Naive thymus-derived CD8-positive, alpha-beta T cell (primary cell): ENCODE measurements at regions of chr6 and their contacts with region 1.

Region 1: GRCh38 chr6:30556066-30556905 is at the start of gene GNL1:
- DNase-seq: peak; percentile 97 to 100 (median 99)
- ATAC-seq: peak; percentile 86 to 87
- H3K4me3 Mint-ChIP-seq: peak within 1 kb of the TSS; percentile 87 to 100 (median 99)
- H3K27ac Mint-ChIP-seq: peak within 1 kb of the TSS; percentile 98 to 100 (median 100)
- H3K4me1 Mint-ChIP-seq: peaks cover 25 to 70% (median 56%) of the 10 kb centered on the region in 4 donors
- H3K27me3 Mint-ChIP-seq: peaks cover 0 to 2% (median 0%) of the 10 kb centered on the region in 5 donors
- polyA plus RNA-seq, gene GNL1: 24.7 to 34.1 (median 28.7) TPM

Region 2: GRCh38 chr6:30364591-30364990 is 191.7 kb before region 1 on chr6:
- POLR2A ChIA-PET with region 1: no interaction called
- DNase-seq: no peak
- ATAC-seq: no peak
- H3K4me3 Mint-ChIP-seq: no peak overlapping the region
- H3K27ac Mint-ChIP-seq: no peak overlapping the region
- H3K4me1 Mint-ChIP-seq: no peaks in the 10 kb centered on the region
- H3K27me3 Mint-ChIP-seq: peaks cover 39 to 62% (median 55%) of the 10 kb centered on the region in 5 donors

Region 3: DNA sequence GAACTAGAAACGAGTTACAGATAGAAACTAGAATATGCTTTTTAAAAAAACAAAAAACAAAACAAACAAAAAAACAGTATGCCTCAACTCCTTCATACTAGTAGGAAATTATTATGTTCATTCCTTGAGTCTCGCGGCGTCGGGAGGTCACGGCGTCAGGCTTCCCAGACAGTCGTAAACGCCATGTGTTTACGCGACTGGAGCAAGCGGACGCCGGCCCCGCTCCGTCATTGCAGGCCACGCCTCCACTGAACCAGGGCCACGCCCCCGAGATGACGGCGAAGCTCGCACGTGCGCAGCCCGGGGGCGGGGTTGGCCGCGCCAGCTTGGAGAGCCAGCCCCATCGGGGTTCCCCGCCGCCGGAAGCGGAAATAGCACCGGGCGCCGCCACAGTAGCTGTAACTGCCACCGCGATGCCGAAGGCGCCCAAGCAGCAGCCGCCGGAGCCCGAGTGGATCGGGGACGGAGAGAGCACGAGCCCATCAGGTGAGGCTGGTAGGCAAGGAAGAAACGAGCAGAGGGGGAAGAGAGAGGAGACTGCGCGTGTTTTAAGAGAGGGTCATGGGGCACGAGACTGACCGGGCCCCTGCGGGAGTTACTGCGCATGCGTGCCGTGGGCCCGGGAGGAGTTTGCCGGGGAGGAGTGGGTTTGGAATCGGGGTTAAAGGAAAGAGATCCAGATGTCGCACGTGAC is 14.9 kb after region 1 on chr6 and contains the start of gene ABCF1:
- POLR2A ChIA-PET with region 1: interaction called, 49 read pairs
- DNase-seq: peak; percentile 98 to 100 (median 99)
- ATAC-seq: peak; percentile 94
- H3K4me3 Mint-ChIP-seq: peak within 1 kb of the TSS; percentile 91 to 100 (median 100)
- H3K27ac Mint-ChIP-seq: peak within 1 kb of the TSS; percentile 98 to 100 (median 99)
- H3K4me1 Mint-ChIP-seq: peaks cover 45 to 67% (median 62%) of the 10 kb centered on the region in 4 donors
- H3K27me3 Mint-ChIP-seq: no peaks in the 10 kb centered on the region
- polyA plus RNA-seq, gene ABCF1: 19.1 to 43.1 (median 30.5) TPM